MCF 10A (cell line): ENCODE measurements at regions of chr3 and their contacts with region 1.

Region 1: GRCh38 chr3:55485211-55485791 is 1.8 kb downstream of the WNT5A start:
- DNase-seq: peak; percentile 81
- H3K4me3 Mint-ChIP-seq: peak overlapping the region; percentile 97
- H3K27ac Mint-ChIP-seq: peak overlapping the region; percentile 79
- H3K4me1 Mint-ChIP-seq: peaks cover 22% of the 10 kb centered on the region
- H3K27me3 Mint-ChIP-seq: no peaks in the 10 kb centered on the region
- CTCF ChIP-seq: peak; percentile 63

Region 2: DNA sequence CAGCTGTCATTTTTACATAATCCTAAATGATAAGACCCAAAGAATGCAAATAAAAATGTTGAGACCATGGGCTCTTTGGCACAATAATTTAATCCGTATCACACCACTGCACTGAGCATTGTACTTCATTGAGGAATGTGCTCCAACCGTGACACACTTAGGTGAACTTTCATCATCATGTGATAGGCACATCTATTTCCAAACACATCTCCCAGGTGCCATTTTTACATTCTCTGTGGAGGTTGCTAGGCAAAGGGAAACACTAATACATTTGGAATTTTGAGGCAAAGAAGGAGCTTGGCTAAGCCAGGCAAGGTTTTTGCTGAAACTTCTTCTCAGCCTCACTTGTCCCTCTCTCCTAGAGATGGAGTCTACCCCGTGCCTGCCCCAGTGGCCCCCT is 626.1 kb before region 1 on chr3:
- CTCF ChIA-PET with region 1: interaction called, 3 read pairs
- POLR2A ChIA-PET with region 1: no interaction called
- intact Hi-C with region 1: loop called (anchors 5 kb)
- DNase-seq: peak; percentile 57
- H3K4me3 Mint-ChIP-seq: no peak overlapping the region
- H3K27ac Mint-ChIP-seq: peak overlapping the region; percentile 78
- H3K4me1 Mint-ChIP-seq: peaks cover 36% of the 10 kb centered on the region
- H3K27me3 Mint-ChIP-seq: no peaks in the 10 kb centered on the region
- CTCF ChIP-seq: no peak

Region 3: DNA sequence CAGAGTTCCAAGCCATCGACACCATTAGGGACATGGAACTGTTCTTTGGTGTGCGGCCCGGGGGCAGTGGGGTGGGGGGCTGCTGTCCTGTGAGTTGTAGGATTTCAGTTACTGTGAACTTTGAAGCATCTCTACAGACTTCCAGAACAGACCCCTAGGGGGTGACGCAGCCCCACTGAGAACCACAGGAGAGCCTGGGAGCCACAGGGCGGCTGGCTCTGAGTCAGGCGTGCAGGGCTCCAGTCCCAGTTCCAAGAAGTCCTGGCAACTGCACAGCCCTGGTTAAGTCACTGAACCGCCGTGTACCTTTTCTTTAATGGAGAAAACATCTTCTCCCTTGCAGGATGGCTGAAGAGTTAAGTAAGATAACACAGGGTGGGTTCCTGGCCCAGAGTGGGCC is 533.9 kb before region 1 on chr3:
- CTCF ChIA-PET with region 1: interaction called, 4 read pairs
- POLR2A ChIA-PET with region 1: no interaction called
- intact Hi-C with region 1: loop called (anchors 2 kb)
- DNase-seq: peak; percentile 78
- H3K4me3 Mint-ChIP-seq: no peak overlapping the region
- H3K27ac Mint-ChIP-seq: no peak overlapping the region
- H3K4me1 Mint-ChIP-seq: peaks cover 20% of the 10 kb centered on the region
- H3K27me3 Mint-ChIP-seq: no peaks in the 10 kb centered on the region
- CTCF ChIP-seq: peak; percentile 50

Region 4: GRCh38 chr3:55074796-55075195 is 410.5 kb before region 1 on chr3:
- CTCF ChIA-PET with region 1: no interaction called
- POLR2A ChIA-PET with region 1: no interaction called
- intact Hi-C with region 1: no loop called
- DNase-seq: no peak
- H3K4me3 Mint-ChIP-seq: no peak overlapping the region
- H3K27ac Mint-ChIP-seq: no peak overlapping the region
- H3K4me1 Mint-ChIP-seq: peaks cover 5% of the 10 kb centered on the region
- H3K27me3 Mint-ChIP-seq: no peaks in the 10 kb centered on the region
- CTCF ChIP-seq: no peak

Region 5: GRCh38 chr3:55330355-55330754 is 154.9 kb before region 1 on chr3:
- CTCF ChIA-PET with region 1: no interaction called
- POLR2A ChIA-PET with region 1: no interaction called
- intact Hi-C with region 1: loop called (anchors 2 kb)
- DNase-seq: peak; percentile 92
- H3K4me3 Mint-ChIP-seq: no peak overlapping the region
- H3K27ac Mint-ChIP-seq: peak overlapping the region; percentile 93
- H3K4me1 Mint-ChIP-seq: peaks cover 35% of the 10 kb centered on the region
- H3K27me3 Mint-ChIP-seq: no peaks in the 10 kb centered on the region
- CTCF ChIP-seq: no peak

Region 6: GRCh38 chr3:55668359-55668758 is 183.1 kb after region 1 on chr3:
- CTCF ChIA-PET with region 1: no interaction called
- POLR2A ChIA-PET with region 1: interaction called, 11 read pairs
- intact Hi-C with region 1: no loop called
- DNase-seq: no peak
- H3K4me3 Mint-ChIP-seq: no peak overlapping the region
- H3K27ac Mint-ChIP-seq: no peak overlapping the region
- H3K4me1 Mint-ChIP-seq: peaks cover 13% of the 10 kb centered on the region
- H3K27me3 Mint-ChIP-seq: no peaks in the 10 kb centered on the region
- CTCF ChIP-seq: no peak

Region 7: DNA sequence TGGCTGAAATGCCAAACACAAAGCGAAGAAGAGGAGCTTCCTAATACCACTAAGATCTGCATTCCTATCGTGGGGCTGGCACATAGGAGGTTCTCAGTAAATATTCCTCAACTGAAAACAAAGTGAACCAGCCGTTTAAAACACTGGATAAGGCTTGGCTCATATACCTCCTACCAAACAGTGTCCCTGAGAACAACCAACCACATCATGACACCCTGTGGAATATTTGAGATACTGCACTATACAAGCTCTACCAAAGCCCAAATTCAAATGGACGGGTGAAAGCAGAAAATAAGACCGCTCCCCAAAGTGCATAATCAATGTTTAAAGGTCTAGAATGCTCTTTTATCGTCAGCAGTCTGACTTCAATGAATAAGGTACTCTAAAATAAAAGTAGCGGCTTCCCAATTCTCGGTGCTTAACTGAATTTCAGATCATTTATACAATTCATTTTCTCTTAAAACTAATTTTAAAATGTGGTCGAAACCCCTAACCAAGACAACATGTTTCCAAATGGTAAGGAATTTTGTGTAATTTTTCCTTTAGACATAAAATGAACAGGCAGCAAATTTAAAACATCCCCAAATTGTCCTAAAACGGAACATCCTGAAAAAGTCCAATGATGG is 557.1 kb after region 1 on chr3:
- CTCF ChIA-PET with region 1: interaction called, 5 read pairs
- POLR2A ChIA-PET with region 1: interaction called, 3 read pairs
- intact Hi-C with region 1: loop called (anchors 5 kb)
- DNase-seq: peak; percentile 61
- H3K4me3 Mint-ChIP-seq: no peak overlapping the region
- H3K27ac Mint-ChIP-seq: no peak overlapping the region
- H3K4me1 Mint-ChIP-seq: no peaks in the 10 kb centered on the region
- H3K27me3 Mint-ChIP-seq: peaks cover 41% of the 10 kb centered on the region
- CTCF ChIP-seq: peak; percentile 44